Gastrocnemius medialis (tissue), 4 donors: ENCODE measurements at regions of chr17 and their contacts with region 1.

Region 1: GRCh38 chr17:59155439-59156182 is at the start of gene PRR11:
- DNase-seq: peak; percentile 95 to 97
- ATAC-seq: peak; percentile 94 to 97
- H3K4me3 ChIP-seq: peak within 1 kb of the TSS; percentile 75 to 94 (median 86)
- H3K27ac ChIP-seq: peak within 1 kb of the TSS; percentile 60 to 74 (median 71)
- H3K4me1 ChIP-seq: peaks cover 9 to 12% of the 10 kb centered on the region in 2 donors
- H3K27me3 ChIP-seq: no peaks in the 10 kb centered on the region
- CTCF ChIP-seq: no peak
- POLR2A ChIP-seq: no peak
- total RNA-seq, gene PRR11: 0.20 to 7.9 (median 0.53) TPM in 3 of 4 donors, not detected in the other

Region 2: DNA sequence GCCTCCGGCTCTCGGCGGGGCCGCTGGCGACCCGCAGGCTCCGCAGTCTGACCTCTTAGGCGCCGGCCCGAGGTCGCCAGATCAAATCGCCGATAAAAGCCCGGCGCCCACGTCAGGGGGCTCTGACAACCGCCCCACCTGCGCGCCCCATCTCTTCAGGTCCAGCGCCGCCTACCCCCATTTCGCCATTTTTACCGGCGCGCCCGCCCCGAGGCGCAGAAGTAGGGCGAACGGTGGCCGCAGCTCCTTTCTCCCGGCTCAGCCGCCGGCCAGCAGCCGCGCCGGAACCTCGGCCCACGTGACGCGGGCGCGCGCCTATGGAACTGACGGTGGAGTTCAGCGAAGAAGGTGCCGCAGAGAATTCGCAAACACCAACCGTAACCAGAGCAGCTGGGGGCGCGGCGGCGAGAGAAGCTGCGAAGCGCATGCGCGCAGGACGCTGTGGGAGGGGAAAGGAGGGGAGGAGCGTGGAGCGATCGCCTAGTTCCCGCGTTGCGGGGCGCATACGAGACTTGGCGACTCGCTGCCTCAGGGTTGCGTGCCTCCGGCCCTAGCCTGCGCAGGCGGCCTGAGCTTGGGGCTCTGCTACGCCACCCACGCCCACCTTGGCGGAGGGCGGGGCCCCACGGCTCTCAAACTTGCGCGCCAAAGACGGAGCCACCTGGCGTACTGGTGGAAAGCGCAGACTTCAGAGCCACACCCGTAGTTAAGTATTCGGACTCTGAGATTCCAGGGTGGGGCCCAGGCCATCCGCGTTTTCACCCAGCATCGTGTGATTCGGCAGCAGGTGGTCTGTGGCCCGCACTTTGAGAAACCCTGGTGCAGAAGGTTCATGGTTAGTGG is 48.9 kb before region 1 on chr17 and contains the start of gene TRIM37:
- in situ Hi-C with region 1: no loop called
- intact Hi-C with region 1: loop called (anchors 5 kb)
- DNase-seq: peak; percentile 96 to 97
- ATAC-seq: peak; percentile 98 to 99
- H3K4me3 ChIP-seq: peak within 1 kb of the TSS; percentile 67 to 99 (median 91)
- H3K27ac ChIP-seq: peak within 1 kb of the TSS; percentile 84 to 99 (median 92)
- H3K4me1 ChIP-seq: peaks cover 7 to 25% of the 10 kb centered on the region in 2 donors
- H3K27me3 ChIP-seq: no peaks in the 10 kb centered on the region
- CTCF ChIP-seq: peak in 2 of 5 experiments; percentile 6 to 27
- POLR2A ChIP-seq: peak; percentile 88 to 89
- total RNA-seq, gene TRIM37: 16.1 to 17.5 (median 16.3) TPM

Region 3: GRCh38 chr17:59220376-59221158 is 65.0 kb after region 1 on chr17 and contains the start of gene GDPD1:
- in situ Hi-C with region 1: no loop called
- intact Hi-C with region 1: loop called (anchors 5 kb)
- DNase-seq: peak; percentile 90 to 93
- ATAC-seq: peak; percentile 93 to 97
- H3K4me3 ChIP-seq: peak within 1 kb of the TSS; percentile 76 to 100 (median 96)
- H3K27ac ChIP-seq: peak within 1 kb of the TSS; percentile 75 to 90 (median 88)
- H3K4me1 ChIP-seq: peaks cover 4 to 5% of the 10 kb centered on the region in 2 donors
- H3K27me3 ChIP-seq: no peaks in the 10 kb centered on the region
- CTCF ChIP-seq: peak; percentile 63 to 82 (median 74)
- POLR2A ChIP-seq: no peak
- total RNA-seq, gene GDPD1: 0.29 to 0.95 (median 0.29) TPM in 3 of 4 donors, not detected in the other